ENCODE measurements at regions of chr9 and their contacts with region 1.

Region 1: GRCh38 chr9:126490871-126491567 is 122.7 kb upstream of the LMX1B start:
- DNase-seq: peak in 1 of 2 experiments; percentile 73
- H3K4me3 ChIP-seq: no peak overlapping the region
- H3K4me3 Mint-ChIP-seq: no peak overlapping the region
- H3K27ac Mint-ChIP-seq: no peak overlapping the region
- H3K4me1 ChIP-seq: no peaks in the 10 kb centered on the region
- H3K4me1 Mint-ChIP-seq: no peaks in the 10 kb centered on the region
- H3K27me3 ChIP-seq: no peaks in the 10 kb centered on the region
- H3K27me3 Mint-ChIP-seq: no peaks in the 10 kb centered on the region
- CTCF ChIP-seq: peak; percentile 88 to 91

Region 2: GRCh38 chr9:125558453-125559092 is 932.4 kb before region 1 on chr9:
- CTCF ChIA-PET with region 1: no interaction called
- POLR2A ChIA-PET with region 1: no interaction called
- intact Hi-C with region 1: loop called (anchors 5 kb)
- DNase-seq: peak; percentile 72 to 79
- H3K4me3 ChIP-seq: no peak overlapping the region
- H3K4me3 Mint-ChIP-seq: no peak overlapping the region
- H3K27ac Mint-ChIP-seq: no peak overlapping the region
- H3K4me1 ChIP-seq: no peaks in the 10 kb centered on the region
- H3K4me1 Mint-ChIP-seq: no peaks in the 10 kb centered on the region
- H3K27me3 ChIP-seq: no peaks in the 10 kb centered on the region
- H3K27me3 Mint-ChIP-seq: no peaks in the 10 kb centered on the region
- CTCF ChIP-seq: peak; percentile 79 to 82

Region 3: GRCh38 chr9:126146254-126147145 is 344.5 kb before region 1 on chr9:
- CTCF ChIA-PET with region 1: no interaction called
- POLR2A ChIA-PET with region 1: no interaction called
- intact Hi-C with region 1: loop called (anchors 10 kb)
- DNase-seq: peak; percentile 89 to 93
- H3K4me3 ChIP-seq: peak overlapping the region; percentile 28
- H3K4me3 Mint-ChIP-seq: peak overlapping the region; percentile 77
- H3K27ac Mint-ChIP-seq: peak overlapping the region; percentile 97
- H3K4me1 ChIP-seq: peaks cover 23% of the 10 kb centered on the region
- H3K4me1 Mint-ChIP-seq: peaks cover 31% of the 10 kb centered on the region
- H3K27me3 ChIP-seq: no peaks in the 10 kb centered on the region
- H3K27me3 Mint-ChIP-seq: no peaks in the 10 kb centered on the region
- CTCF ChIP-seq: peak; percentile 50 to 81

Region 4: GRCh38 chr9:126228781-126229444 is 262.1 kb before region 1 on chr9:
- CTCF ChIA-PET with region 1: no interaction called
- POLR2A ChIA-PET with region 1: no interaction called
- intact Hi-C with region 1: loop called (anchors 10 kb)
- DNase-seq: peak; percentile 74 to 80
- H3K4me3 ChIP-seq: no peak overlapping the region
- H3K4me3 Mint-ChIP-seq: no peak overlapping the region
- H3K27ac Mint-ChIP-seq: no peak overlapping the region
- H3K4me1 ChIP-seq: no peaks in the 10 kb centered on the region
- H3K4me1 Mint-ChIP-seq: no peaks in the 10 kb centered on the region
- H3K27me3 ChIP-seq: no peaks in the 10 kb centered on the region; the same call in 1 of the 2 replicates
- H3K27me3 Mint-ChIP-seq: peaks cover 7% of the 10 kb centered on the region
- CTCF ChIP-seq: peak; percentile 90 to 91

Region 5: GRCh38 chr9:126248680-126249079 is 242.3 kb before region 1 on chr9:
- CTCF ChIA-PET with region 1: no interaction called
- POLR2A ChIA-PET with region 1: no interaction called
- intact Hi-C with region 1: no loop called
- DNase-seq: no peak
- H3K4me3 ChIP-seq: no peak overlapping the region
- H3K4me3 Mint-ChIP-seq: no peak overlapping the region
- H3K27ac Mint-ChIP-seq: no peak overlapping the region
- H3K4me1 ChIP-seq: no peaks in the 10 kb centered on the region
- H3K4me1 Mint-ChIP-seq: no peaks in the 10 kb centered on the region
- H3K27me3 ChIP-seq: no peaks in the 10 kb centered on the region
- H3K27me3 Mint-ChIP-seq: peaks cover 12% of the 10 kb centered on the region
- CTCF ChIP-seq: no peak

Region 6: GRCh38 chr9:126301985-126302603 is 188.9 kb before region 1 on chr9:
- CTCF ChIA-PET with region 1: no interaction called
- POLR2A ChIA-PET with region 1: no interaction called
- intact Hi-C with region 1: loop called (anchors 1 kb)
- DNase-seq: peak; percentile 75 to 81
- H3K4me3 ChIP-seq: no peak overlapping the region
- H3K4me3 Mint-ChIP-seq: no peak overlapping the region
- H3K27ac Mint-ChIP-seq: no peak overlapping the region
- H3K4me1 ChIP-seq: no peaks in the 10 kb centered on the region
- H3K4me1 Mint-ChIP-seq: peaks cover 7% of the 10 kb centered on the region
- H3K27me3 ChIP-seq: no peaks in the 10 kb centered on the region
- H3K27me3 Mint-ChIP-seq: no peaks in the 10 kb centered on the region
- CTCF ChIP-seq: peak; percentile 83 to 87

Region 7: GRCh38 chr9:126398403-126399058 is 92.5 kb before region 1 on chr9:
- CTCF ChIA-PET with region 1: no interaction called
- POLR2A ChIA-PET with region 1: no interaction called
- intact Hi-C with region 1: loop called (anchors 2 kb)
- DNase-seq: peak in 1 of 2 experiments; percentile 84
- H3K4me3 ChIP-seq: no peak overlapping the region
- H3K4me3 Mint-ChIP-seq: no peak overlapping the region
- H3K27ac Mint-ChIP-seq: no peak overlapping the region
- H3K4me1 ChIP-seq: no peaks in the 10 kb centered on the region
- H3K4me1 Mint-ChIP-seq: no peaks in the 10 kb centered on the region
- H3K27me3 ChIP-seq: no peaks in the 10 kb centered on the region
- H3K27me3 Mint-ChIP-seq: no peaks in the 10 kb centered on the region
- CTCF ChIP-seq: peak; percentile 87 to 90

Region 8: GRCh38 chr9:126440940-126441339 is 50.1 kb before region 1 on chr9:
- CTCF ChIA-PET with region 1: no interaction called
- POLR2A ChIA-PET with region 1: no interaction called
- intact Hi-C with region 1: no loop called
- DNase-seq: no peak
- H3K4me3 ChIP-seq: no peak overlapping the region
- H3K4me3 Mint-ChIP-seq: no peak overlapping the region
- H3K27ac Mint-ChIP-seq: no peak overlapping the region
- H3K4me1 ChIP-seq: no peaks in the 10 kb centered on the region
- H3K4me1 Mint-ChIP-seq: no peaks in the 10 kb centered on the region
- H3K27me3 ChIP-seq: no peaks in the 10 kb centered on the region
- H3K27me3 Mint-ChIP-seq: no peaks in the 10 kb centered on the region
- CTCF ChIP-seq: no peak

Region 9: GRCh38 chr9:126773004-126773607 is 282.1 kb after region 1 on chr9:
- CTCF ChIA-PET with region 1: no interaction called
- POLR2A ChIA-PET with region 1: no interaction called
- intact Hi-C with region 1: no loop called
- DNase-seq: peak; percentile 42 to 45
- H3K4me3 ChIP-seq: no peak overlapping the region
- H3K4me3 Mint-ChIP-seq: no peak overlapping the region
- H3K27ac Mint-ChIP-seq: no peak overlapping the region
- H3K4me1 ChIP-seq: no peaks in the 10 kb centered on the region
- H3K4me1 Mint-ChIP-seq: no peaks in the 10 kb centered on the region
- H3K27me3 ChIP-seq: no peaks in the 10 kb centered on the region
- H3K27me3 Mint-ChIP-seq: peaks cover 8% of the 10 kb centered on the region
- CTCF ChIP-seq: peak; percentile 71 to 74